PC-9 (cell line): ENCODE measurements at regions of chr22 and their contacts with region 1.

Region 1: GRCh38 chr22:36073476-36073875 is 44.9 kb upstream of the RBFOX2 start:
- DNase-seq: no peak
- H3K4me3 ChIP-seq: no peak overlapping the region
- H3K27ac ChIP-seq: no peak overlapping the region
- H3K4me1 ChIP-seq: no peaks in the 10 kb centered on the region
- H3K27me3 ChIP-seq: no peaks in the 10 kb centered on the region
- CTCF ChIP-seq: no peak

Region 2: GRCh38 chr22:35950262-35950661 is 123.2 kb before region 1 on chr22:
- CTCF ChIA-PET with region 1: no interaction called
- POLR2A ChIA-PET with region 1: no interaction called
- intact Hi-C with region 1: no loop called
- DNase-seq: no peak
- H3K4me3 ChIP-seq: no peak overlapping the region
- H3K27ac ChIP-seq: no peak overlapping the region
- H3K4me1 ChIP-seq: no peaks in the 10 kb centered on the region
- H3K27me3 ChIP-seq: no peaks in the 10 kb centered on the region
- CTCF ChIP-seq: no peak

Region 3: GRCh38 chr22:36037102-36037758 is 36.2 kb before region 1 on chr22:
- CTCF ChIA-PET with region 1: no interaction called
- POLR2A ChIA-PET with region 1: no interaction called
- intact Hi-C with region 1: no loop called
- DNase-seq: no peak
- H3K4me3 ChIP-seq: no peak overlapping the region
- H3K27ac ChIP-seq: no peak overlapping the region
- H3K4me1 ChIP-seq: no peaks in the 10 kb centered on the region
- H3K27me3 ChIP-seq: no peaks in the 10 kb centered on the region
- CTCF ChIP-seq: no peak

Region 4: GRCh38 chr22:36097880-36098279 is 24.4 kb after region 1 on chr22:
- CTCF ChIA-PET with region 1: no interaction called
- POLR2A ChIA-PET with region 1: interaction called, 20 read pairs
- intact Hi-C with region 1: no loop called
- DNase-seq: no peak
- H3K4me3 ChIP-seq: no peak overlapping the region
- H3K27ac ChIP-seq: no peak overlapping the region
- H3K4me1 ChIP-seq: no peaks in the 10 kb centered on the region
- H3K27me3 ChIP-seq: no peaks in the 10 kb centered on the region
- CTCF ChIP-seq: no peak